ENCODE measurements at regions of chr4 and their contacts with region 1.

Region 1: GRCh38 chr4:8176547-8177399 is 18.2 kb upstream of the ABLIM2 start:
- DNase-seq: peak; percentile 60 to 74 (median 66)
- ATAC-seq: peak; percentile 72 to 88 (median 80)
- H3K4me3 ChIP-seq: no peak overlapping the region
- H3K27ac ChIP-seq: no peak overlapping the region
- H3K4me1 ChIP-seq: peaks cover 2 to 26% (median 16%) of the 10 kb centered on the region in 12 donors
- H3K27me3 ChIP-seq: no peaks in the 10 kb centered on the region
- CTCF ChIP-seq: peak; percentile 77 to 90 (median 84)
- POLR2A ChIP-seq: no peak

Region 2: DNA sequence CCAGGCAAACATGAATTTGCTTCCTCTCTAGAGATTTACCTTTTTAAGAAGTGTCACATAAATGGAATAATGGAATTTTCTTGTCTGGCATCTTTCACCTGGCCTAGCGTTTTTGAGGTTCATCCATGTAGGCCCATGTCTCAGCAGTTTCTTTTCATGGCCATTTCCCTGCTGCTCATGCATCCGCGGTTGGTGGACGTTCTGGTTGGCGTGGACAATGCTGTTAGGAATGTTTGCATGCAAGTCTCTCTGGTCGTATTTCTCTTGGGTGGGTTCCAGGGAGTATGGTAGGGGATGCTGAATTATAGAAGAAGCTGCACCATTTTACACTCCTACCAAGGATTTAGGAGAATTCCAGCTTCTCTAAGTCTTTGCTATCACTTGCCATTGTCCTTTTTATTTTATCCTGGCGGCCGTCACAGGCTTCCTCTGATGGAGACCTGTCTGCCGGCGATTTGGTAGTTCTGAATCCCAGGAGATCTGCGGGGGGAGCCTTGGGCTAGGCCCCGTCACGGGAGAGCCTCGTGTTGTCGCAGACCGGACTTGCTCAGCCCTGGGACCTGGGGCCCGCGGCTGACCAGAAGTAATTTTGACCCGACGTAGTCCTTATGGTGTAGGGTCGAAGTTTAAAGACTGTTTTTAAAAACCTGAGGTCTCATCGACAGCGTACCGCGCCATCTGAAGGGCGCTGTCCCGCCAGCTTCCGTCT is 1190.5 kb before region 1 on chr4:
- intact Hi-C with region 1: no loop called
- DNase-seq: peak; percentile 63 to 73 (median 68)
- ATAC-seq: peak; percentile 21 to 71 (median 42)
- H3K4me3 ChIP-seq: peak overlapping the region; percentile 62 to 98 (median 85)
- H3K27ac ChIP-seq: peak overlapping the region; percentile 80 to 98 (median 93)
- H3K4me1 ChIP-seq: peaks cover 6 to 80% (median 43%) of the 10 kb centered on the region in 12 donors
- H3K27me3 ChIP-seq: no peaks in the 10 kb centered on the region
- CTCF ChIP-seq: no peak
- POLR2A ChIP-seq: no peak

Region 3: DNA sequence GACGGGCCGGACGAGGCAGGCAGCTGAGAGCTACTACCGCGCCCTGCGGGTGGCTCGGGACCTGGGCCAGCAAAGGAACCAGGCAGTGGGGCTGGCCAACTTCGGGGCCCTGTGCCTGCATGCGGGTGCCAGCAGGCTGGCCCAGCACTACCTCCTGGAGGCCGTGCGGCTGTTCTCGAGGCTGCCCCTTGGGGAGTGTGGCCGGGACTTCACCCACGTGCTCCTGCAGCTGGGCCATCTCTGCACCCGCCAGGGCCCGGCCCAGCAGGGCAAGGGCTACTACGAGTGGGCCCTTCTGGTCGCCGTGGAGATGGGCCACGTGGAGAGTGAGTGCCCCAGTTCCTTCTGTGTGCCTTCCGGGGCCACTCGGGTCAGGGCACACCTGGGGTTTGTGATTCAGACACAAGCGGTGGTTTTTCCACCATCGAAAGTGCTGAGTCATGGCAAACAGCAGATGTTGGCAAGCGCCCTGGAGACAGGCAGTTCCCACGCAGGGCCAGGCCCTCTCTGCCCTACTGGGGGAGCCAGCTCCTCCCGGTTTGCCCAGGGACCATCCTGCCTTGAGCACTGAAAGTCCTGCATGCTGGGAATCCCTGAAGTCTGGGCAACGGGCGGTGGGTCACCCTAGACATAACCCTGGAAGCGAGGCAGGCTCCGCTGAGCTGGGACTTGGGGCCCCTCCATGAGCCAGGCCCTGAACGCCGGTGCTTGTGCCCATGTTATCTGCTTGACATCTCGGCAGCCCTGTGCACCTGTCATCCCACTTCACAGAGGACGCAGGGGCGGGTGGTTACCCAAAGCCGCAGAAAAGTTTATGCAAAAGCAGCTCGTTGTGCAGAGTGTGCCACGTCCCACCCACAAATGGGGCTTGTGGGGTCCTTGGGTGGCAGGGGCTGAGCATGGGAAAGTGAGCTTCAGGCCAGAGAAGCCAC is 51.8 kb after region 1 on chr4:
- intact Hi-C with region 1: loop called in 2 of 10 experiments (anchors 10 kb)
- DNase-seq: peak; percentile 58 to 81 (median 73)
- ATAC-seq: peak; percentile 45 to 67 (median 64)
- H3K4me3 ChIP-seq: no peak overlapping the region
- H3K27ac ChIP-seq: peak overlapping the region in 2 of 12 donors; percentile 32 to 49
- H3K4me1 ChIP-seq: peaks cover 0 to 36% (median 9%) of the 10 kb centered on the region in 12 donors
- H3K27me3 ChIP-seq: no peaks in the 10 kb centered on the region
- CTCF ChIP-seq: no peak
- POLR2A ChIP-seq: no peak

Region 4: GRCh38 chr4:8241895-8242696 is 65.3 kb after region 1 on chr4:
- intact Hi-C with region 1: loop called in 4 of 10 experiments (anchors 5 kb)
- DNase-seq: peak; percentile 87 to 93 (median 88)
- ATAC-seq: peak; percentile 75 to 91 (median 86)
- H3K4me3 ChIP-seq: no peak overlapping the region
- H3K27ac ChIP-seq: peak overlapping the region in 7 of 12 donors; percentile 9 to 63 (median 47)
- H3K4me1 ChIP-seq: peaks cover 0 to 21% (median 15%) of the 10 kb centered on the region in 12 donors
- H3K27me3 ChIP-seq: no peaks in the 10 kb centered on the region
- CTCF ChIP-seq: peak; percentile 97 to 100 (median 98)
- POLR2A ChIP-seq: no peak

Region 5: DNA sequence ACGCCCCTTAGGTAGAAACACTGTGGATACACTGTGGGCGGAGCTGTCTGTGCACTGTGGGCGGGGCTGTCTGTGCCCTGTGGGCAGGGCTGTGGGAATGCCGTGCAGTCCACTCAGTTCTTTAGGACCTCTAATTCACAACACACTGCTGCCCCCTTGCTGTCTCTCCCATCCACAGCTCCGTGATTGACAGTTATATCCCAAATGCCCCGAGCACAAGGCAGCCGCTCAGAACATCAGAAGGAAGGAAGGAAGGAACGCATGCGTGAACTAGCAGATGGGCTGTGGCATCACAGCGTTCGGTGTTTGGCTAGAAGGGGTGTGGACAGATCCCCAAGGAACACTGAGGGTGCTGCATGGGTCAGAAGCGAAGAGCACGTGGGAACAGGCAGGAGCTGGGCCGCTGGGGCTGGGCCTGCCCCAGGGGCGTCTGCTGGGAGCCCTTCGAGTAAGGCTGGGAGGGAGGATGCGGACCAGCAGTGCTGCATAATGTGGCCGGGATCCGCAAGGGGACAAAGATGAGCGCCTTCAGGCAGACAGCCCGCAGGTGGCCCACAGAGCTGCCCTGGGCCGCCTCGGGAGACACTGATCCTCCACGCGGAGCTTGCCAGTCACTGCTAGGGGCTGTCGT is 234.0 kb after region 1 on chr4:
- intact Hi-C with region 1: loop called in 5 of 10 experiments (anchors 5 to 10 kb)
- DNase-seq: peak; percentile 57 to 80 (median 71)
- ATAC-seq: peak; percentile 70 to 79 (median 74)
- H3K4me3 ChIP-seq: no peak overlapping the region
- H3K27ac ChIP-seq: no peak overlapping the region
- H3K4me1 ChIP-seq: peaks cover 0 to 22% (median 11%) of the 10 kb centered on the region in 12 donors
- H3K27me3 ChIP-seq: no peaks in the 10 kb centered on the region
- CTCF ChIP-seq: peak in 11 of 12 donors; percentile 9 to 61 (median 43)
- POLR2A ChIP-seq: no peak

Measured in heart left ventricle (tissue), 16 donors.